Heart left ventricle (tissue), 16 donors: ENCODE measurements at regions of chr1 and their contacts with region 1.

Region 1: DNA sequence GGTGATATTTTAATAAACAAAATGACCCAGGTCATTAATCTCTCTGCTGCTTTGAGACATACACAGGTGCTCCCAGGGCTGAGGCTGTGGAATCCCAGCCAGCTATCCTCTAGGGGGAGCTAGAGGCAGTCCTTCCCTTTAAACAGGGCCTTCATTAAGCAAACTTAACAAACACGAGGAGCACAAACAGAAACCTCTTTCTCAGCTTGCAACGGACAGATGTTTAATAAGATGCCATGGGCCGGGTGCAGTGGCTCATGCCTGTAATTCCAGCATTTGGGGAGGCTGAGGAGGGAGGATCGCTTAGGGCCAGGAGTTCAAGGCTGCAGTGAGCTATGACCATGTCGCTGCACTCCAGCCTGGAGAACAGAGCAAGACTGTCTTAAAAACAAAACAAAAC is 106.7 kb downstream of the HIVEP3 start:
- DNase-seq: peak in 2 of 5 donors; percentile 38 to 57
- ATAC-seq: peak in 1 of 4 donors; percentile 30
- H3K4me3 ChIP-seq: no peak overlapping the region
- H3K27ac ChIP-seq: peak overlapping the region in 10 of 12 donors; percentile 4 to 87 (median 38)
- H3K4me1 ChIP-seq: peaks cover 5 to 58% (median 25%) of the 10 kb centered on the region in 12 donors
- H3K27me3 ChIP-seq: no peaks in the 10 kb centered on the region
- CTCF ChIP-seq: peak; percentile 46 to 75 (median 62)
- POLR2A ChIP-seq: no peak

Region 2: DNA sequence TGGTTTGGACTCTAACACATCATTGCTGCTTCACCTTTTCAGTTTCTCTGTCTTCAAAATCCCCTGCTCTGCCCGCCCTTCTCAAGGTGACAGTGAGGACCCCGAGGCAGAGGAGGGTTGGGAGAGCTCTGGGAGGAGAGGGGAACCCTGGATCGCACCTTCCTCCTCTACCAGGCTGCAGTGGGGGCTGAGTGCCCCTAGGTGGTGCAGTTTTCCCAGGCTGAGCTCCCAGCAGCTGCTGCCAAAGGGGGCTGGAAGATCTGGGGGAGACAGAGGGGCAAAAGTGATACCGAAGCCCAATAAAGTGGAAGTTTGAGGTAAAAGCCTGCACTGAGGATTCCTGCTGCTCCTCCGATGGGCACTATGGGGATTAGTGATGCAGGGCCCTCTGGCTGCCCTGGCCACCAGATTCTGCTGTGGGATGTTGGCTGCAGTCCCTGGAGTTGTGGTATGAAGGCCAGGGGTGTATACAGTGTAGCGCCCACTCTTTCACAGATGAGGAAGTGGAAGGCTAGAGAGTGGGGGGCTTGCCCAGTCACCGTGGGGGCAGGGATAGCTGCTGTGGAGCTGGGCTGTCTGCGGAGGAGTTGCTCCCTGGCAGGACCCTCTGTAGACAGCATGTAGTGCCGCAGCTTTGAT is 529.3 kb before region 1 on chr1:
- intact Hi-C with region 1: no loop called
- DNase-seq: peak in 1 of 5 donors; percentile 34
- ATAC-seq: peak; percentile 12 to 82 (median 68)
- H3K4me3 ChIP-seq: no peak overlapping the region
- H3K27ac ChIP-seq: no peak overlapping the region
- H3K4me1 ChIP-seq: peaks cover 0 to 16% (median 3%) of the 10 kb centered on the region in 12 donors
- H3K27me3 ChIP-seq: peaks cover 0 to 8% (median 0%) of the 10 kb centered on the region in 9 donors
- CTCF ChIP-seq: peak; percentile 57 to 86 (median 76)
- POLR2A ChIP-seq: no peak

Region 3: DNA sequence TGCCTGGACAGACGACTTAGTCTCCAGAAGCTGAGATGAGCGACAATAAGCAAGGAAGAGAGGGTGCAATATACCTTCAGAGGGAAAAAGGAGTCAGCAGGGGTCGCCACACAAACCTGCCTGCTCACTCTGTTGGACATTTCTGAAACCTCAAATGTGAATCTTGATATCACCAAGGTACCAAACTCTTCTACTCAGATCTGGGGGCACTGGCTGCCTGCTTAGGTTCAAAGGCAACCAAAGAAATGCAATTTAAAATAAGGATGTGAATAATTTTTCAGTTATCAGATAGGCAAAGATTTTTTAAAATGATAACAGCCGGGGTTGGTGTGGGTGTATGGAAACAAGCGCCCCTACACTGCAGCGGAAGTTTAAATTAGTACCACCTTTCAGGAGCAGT is 57.5 kb before region 1 on chr1:
- intact Hi-C with region 1: no loop called
- DNase-seq: no peak
- ATAC-seq: no peak
- H3K4me3 ChIP-seq: no peak overlapping the region
- H3K27ac ChIP-seq: no peak overlapping the region
- H3K4me1 ChIP-seq: peaks cover 0 to 40% (median 5%) of the 10 kb centered on the region in 12 donors
- H3K27me3 ChIP-seq: no peaks in the 10 kb centered on the region
- CTCF ChIP-seq: no peak
- POLR2A ChIP-seq: no peak

Region 4: DNA sequence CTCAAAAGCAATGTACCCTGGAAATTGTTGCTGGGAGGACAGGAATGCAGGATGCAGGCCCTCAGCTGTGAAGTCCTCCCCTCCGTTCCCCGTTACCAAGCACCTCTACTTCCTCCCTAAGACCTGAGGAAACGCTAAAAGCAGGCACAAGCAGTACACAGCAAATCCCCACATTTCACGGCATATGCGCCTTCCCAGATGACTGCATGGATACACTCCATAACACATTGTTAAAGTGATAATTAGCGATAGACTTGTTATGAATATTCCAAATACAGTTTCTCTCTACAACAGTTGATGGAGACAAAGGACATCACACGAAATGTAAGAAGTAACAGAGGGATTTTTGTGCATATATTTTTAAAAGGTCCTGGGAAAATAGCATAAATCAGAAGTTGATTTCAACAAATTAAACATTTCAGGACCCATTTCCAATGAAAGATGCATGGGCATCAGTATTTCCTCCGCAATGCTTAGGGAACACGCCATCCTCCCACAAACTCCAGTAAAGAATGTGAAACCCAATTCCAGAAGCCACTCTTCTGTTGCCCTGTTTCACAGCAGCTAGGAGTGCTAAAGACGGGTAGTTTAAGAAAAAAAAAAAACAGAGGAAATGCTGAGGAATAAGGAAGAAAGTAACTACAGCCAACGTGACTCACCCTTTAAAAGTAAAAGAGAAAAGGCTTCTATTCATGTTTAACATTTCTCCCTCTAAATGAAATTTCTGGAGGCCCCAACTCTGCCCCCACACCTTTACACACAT is 31.1 kb after region 1 on chr1:
- intact Hi-C with region 1: loop called in 1 of 10 experiments (anchors 2 kb)
- DNase-seq: no peak
- ATAC-seq: no peak
- H3K4me3 ChIP-seq: no peak overlapping the region
- H3K27ac ChIP-seq: peak overlapping the region in 1 of 12 donors; percentile 30
- H3K4me1 ChIP-seq: peaks cover 0 to 56% (median 15%) of the 10 kb centered on the region in 12 donors
- H3K27me3 ChIP-seq: no peaks in the 10 kb centered on the region
- CTCF ChIP-seq: peak in 1 of 12 donors; percentile 8
- POLR2A ChIP-seq: no peak

Region 5: GRCh38 chr1:41862384-41863174 is 50.5 kb after region 1 on chr1:
- intact Hi-C with region 1: no loop called
- DNase-seq: no peak
- ATAC-seq: no peak
- H3K4me3 ChIP-seq: no peak overlapping the region
- H3K27ac ChIP-seq: no peak overlapping the region
- H3K4me1 ChIP-seq: peaks cover 0 to 17% (median 9%) of the 10 kb centered on the region in 12 donors
- H3K27me3 ChIP-seq: no peaks in the 10 kb centered on the region
- CTCF ChIP-seq: no peak
- POLR2A ChIP-seq: no peak

Region 6: DNA sequence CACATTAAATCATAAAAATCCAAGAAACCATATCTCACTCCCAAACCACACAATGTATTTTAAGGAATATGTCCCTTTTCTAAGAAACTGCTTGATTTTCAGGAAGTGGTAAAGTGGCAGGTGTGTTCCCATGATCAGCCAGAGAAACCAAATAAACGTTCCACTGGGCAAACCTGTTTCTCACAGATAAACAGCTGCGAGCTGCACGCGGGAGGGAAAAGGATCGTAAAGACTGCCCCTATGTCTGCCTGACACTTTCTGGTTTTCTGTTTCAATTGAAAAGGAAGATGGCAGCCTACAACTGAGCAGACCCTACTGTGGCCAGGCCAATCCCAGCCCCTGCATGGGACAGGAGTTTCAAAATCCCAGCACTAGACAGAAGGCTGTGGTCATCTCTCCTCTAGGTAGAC is 70.0 kb after region 1 on chr1:
- intact Hi-C with region 1: loop called in 1 of 10 experiments (anchors 5 kb)
- DNase-seq: no peak
- ATAC-seq: peak in 1 of 4 donors; percentile 4
- H3K4me3 ChIP-seq: no peak overlapping the region
- H3K27ac ChIP-seq: peak overlapping the region; percentile 37 to 77 (median 66)
- H3K4me1 ChIP-seq: peaks cover 0 to 75% (median 30%) of the 10 kb centered on the region in 12 donors
- H3K27me3 ChIP-seq: no peaks in the 10 kb centered on the region
- CTCF ChIP-seq: no peak
- POLR2A ChIP-seq: no peak

Region 7: GRCh38 chr1:41902125-41902524 is 90.1 kb after region 1 on chr1:
- intact Hi-C with region 1: loop called in 2 of 10 experiments (anchors 5 kb)
- DNase-seq: peak in 2 of 5 donors; percentile 52 to 64
- ATAC-seq: peak in 3 of 4 donors; percentile 65 to 87 (median 66)
- H3K4me3 ChIP-seq: no peak overlapping the region
- H3K27ac ChIP-seq: peak overlapping the region in 3 of 12 donors; percentile 15 to 66 (median 65)
- H3K4me1 ChIP-seq: peaks cover 0 to 56% (median 21%) of the 10 kb centered on the region in 12 donors
- H3K27me3 ChIP-seq: no peaks in the 10 kb centered on the region
- CTCF ChIP-seq: no peak
- POLR2A ChIP-seq: no peak

Region 8: DNA sequence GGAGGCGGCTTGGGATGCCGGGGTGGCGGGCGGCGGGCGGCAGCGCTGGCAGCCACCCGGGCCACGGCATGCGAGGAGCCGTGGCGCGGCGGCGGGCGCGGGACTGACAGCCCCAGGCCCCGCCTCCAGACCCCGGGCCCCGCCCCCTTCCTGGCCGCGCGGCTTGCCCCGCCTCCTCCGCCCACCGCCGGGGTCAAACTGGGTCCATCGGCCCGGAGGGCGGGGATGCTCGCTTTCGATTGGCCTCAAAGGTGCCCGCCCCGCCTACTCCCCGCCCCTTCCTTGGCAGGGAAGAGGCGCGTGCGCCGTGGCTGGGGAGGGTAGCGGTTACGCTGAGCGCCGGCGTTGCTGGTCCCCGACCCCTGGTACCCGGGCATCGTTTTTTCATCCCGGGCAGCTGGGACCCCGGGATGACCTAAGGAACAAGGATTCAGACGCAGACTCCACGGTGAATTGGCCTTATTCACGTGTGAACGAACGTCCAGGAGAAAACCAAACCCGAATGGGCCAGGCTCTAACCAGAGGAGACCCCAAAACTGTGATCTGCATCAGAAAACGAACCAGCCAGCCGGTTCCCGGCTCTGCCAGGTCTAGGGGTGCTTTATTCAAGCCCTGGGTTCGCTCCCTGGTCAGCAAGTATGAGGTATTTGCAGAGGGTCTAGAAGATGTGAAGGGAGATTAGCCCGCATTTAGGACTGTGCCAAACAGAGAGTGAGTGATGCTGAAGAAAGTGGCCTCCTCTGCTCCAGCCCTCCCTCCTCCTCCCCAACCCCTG is 224.0 kb after region 1 on chr1:
- intact Hi-C with region 1: loop called (anchors 5 to 10 kb)
- DNase-seq: peak; percentile 97 to 99 (median 98)
- ATAC-seq: peak; percentile 97 to 99 (median 98)
- H3K4me3 ChIP-seq: peak overlapping the region; percentile 11 to 100 (median 90)
- H3K27ac ChIP-seq: peak overlapping the region; percentile 50 to 88 (median 78)
- H3K4me1 ChIP-seq: peaks cover 0 to 20% (median 9%) of the 10 kb centered on the region in 12 donors
- H3K27me3 ChIP-seq: no peaks in the 10 kb centered on the region
- CTCF ChIP-seq: peak in 1 of 12 donors; percentile 1
- POLR2A ChIP-seq: peak in 1 of 2 donors; percentile 37

Region 9: DNA sequence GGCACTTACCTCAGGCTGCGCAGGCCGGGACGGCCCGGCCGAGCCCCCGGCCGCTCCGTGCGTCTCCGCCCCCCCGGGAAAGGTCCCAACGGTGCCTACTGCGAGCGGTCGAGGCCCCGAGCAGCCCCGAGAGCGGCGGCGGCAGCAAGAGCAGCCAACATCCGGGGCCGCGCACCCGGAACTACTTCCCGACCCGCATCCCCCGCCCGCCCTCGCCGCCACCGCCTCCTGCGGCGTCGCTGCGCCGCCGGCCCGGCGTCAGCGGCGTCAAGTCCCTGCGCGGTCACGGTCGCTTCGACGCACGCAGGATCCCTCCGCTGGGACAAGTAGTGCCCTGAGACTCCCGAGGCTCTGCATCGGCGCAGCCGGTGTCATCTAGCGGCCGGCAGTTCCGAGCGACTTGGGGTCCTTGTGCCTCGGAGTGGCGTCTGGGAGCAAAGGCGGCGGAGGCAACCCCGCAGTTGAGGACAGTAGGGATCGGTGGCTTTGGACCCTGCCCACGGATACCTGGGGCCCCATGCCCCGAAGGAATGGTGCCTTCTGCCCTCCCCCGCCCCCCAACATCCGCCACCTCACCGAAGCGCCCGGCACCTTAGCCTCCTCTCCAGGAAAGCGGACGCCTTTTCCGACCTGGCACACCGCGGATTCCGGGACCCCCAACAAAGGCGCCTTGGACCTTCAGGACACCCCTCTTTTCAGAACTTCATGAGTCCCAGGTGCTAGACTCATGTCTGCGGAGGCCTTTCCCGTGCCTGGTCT is 523.2 kb after region 1 on chr1 and contains the start of gene FOXJ3:
- intact Hi-C with region 1: loop called in 1 of 10 experiments (anchors 10 kb)
- DNase-seq: peak; percentile 94 to 97 (median 95)
- ATAC-seq: peak; percentile 74 to 96 (median 91)
- H3K4me3 ChIP-seq: peak within 1 kb of the TSS; percentile 72 to 99 (median 94)
- H3K27ac ChIP-seq: peak within 1 kb of the TSS; percentile 83 to 98 (median 95)
- H3K4me1 ChIP-seq: peaks cover 3 to 57% (median 30%) of the 10 kb centered on the region in 12 donors
- H3K27me3 ChIP-seq: no peaks in the 10 kb centered on the region
- CTCF ChIP-seq: no peak
- POLR2A ChIP-seq: peak in 1 of 2 donors; percentile 61
- total RNA-seq, gene FOXJ3: 33.4 to 48.8 (median 42.3) TPM